ENCODE measurements at regions of chr18 and their contacts with region 1.

Region 1: GRCh38 chr18:52569492-52569891 is 229.5 kb downstream of the DCC start:
- DNase-seq: no peak
- ATAC-seq: no peak
- H3K4me3 Mint-ChIP-seq: no peak overlapping the region
- H3K27ac Mint-ChIP-seq: no peak overlapping the region
- H3K4me1 Mint-ChIP-seq: no peaks in the 10 kb centered on the region
- H3K27me3 Mint-ChIP-seq: no peaks in the 10 kb centered on the region

Region 2: GRCh38 chr18:52620926-52621439 is 51.5 kb after region 1 on chr18:
- CTCF ChIA-PET with region 1: no interaction called
- POLR2A ChIA-PET with region 1: no interaction called
- intact Hi-C with region 1: loop called in 1 of 2 experiments (anchors 10 kb)
- DNase-seq: no peak
- ATAC-seq: no peak
- H3K4me3 Mint-ChIP-seq: no peak overlapping the region
- H3K27ac Mint-ChIP-seq: no peak overlapping the region
- H3K4me1 Mint-ChIP-seq: no peaks in the 10 kb centered on the region
- H3K27me3 Mint-ChIP-seq: no peaks in the 10 kb centered on the region

Region 3: GRCh38 chr18:52812834-52813233 is 243.3 kb after region 1 on chr18:
- CTCF ChIA-PET with region 1: no interaction called
- POLR2A ChIA-PET with region 1: no interaction called
- intact Hi-C with region 1: no loop called
- DNase-seq: no peak
- ATAC-seq: no peak
- H3K4me3 Mint-ChIP-seq: no peak overlapping the region
- H3K27ac Mint-ChIP-seq: no peak overlapping the region
- H3K4me1 Mint-ChIP-seq: no peaks in the 10 kb centered on the region
- H3K27me3 Mint-ChIP-seq: no peaks in the 10 kb centered on the region

Measured in activated CD4-positive, alpha-beta T cell treated with anti-CD3 and anti-CD28 coated beads for 36 hours (primary cell).